Adrenal gland (tissue), 19 donors: ENCODE measurements at regions of chr1 and their contacts with region 1.

Region 1: GRCh38 chr1:155277070-155277895 is at the start of gene HCN3:
- DNase-seq: peak; percentile 97 to 99 (median 99)
- H3K4me3 ChIP-seq: peak within 1 kb of the TSS; percentile 38 to 82 (median 66)
- H3K27ac ChIP-seq: peak within 1 kb of the TSS in 2 of 5 donors; percentile 60 to 73
- H3K4me1 ChIP-seq: peaks cover 16 to 21% of the 10 kb centered on the region in 2 donors
- H3K27me3 ChIP-seq: no peaks in the 10 kb centered on the region
- CTCF ChIP-seq: peak in 4 of 6 experiments; percentile 27 to 70 (median 62)
- POLR2A ChIP-seq: no peak
- total RNA-seq, gene HCN3: 1.0 to 6.5 (median 3.6) TPM

Region 2: DNA sequence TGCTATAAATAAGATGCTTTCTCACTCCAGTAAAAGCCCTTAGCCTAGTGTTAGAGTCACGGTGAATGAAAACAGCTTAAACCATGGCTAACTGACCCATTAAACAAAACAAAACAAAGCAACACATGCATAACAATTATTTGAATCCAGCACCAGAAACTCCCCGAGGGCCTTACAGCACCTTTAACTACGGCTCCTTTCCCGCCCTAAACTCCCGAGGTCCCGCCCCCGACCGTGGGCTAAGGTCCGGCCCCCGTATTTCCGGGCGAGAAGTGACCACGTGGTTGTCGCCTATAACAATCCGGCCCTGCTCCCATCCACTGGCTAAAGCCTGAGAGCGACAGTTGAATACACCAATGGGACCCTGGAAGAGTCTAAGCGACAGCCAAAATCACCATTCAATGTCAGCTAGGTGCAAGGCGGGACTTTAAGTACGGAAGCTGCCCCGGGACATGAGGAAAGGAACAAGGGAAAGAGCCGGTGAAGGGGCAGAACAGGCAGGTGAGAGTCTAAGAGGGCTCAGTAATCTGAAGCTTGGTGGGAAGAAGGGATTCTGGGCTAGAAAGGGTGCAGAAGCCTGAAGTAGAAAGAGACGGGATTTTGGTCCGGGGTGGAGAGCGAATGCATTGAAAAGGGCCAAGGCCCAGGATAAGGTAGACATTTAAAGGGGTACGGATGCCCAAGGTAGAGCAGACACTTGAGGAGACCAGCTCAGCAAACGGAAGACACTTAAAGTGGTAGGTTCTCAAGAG is 294.2 kb before region 1 on chr1 and contains the start of gene FLAD1:
- intact Hi-C with region 1: no loop called
- DNase-seq: peak; percentile 97 to 100 (median 99)
- H3K4me3 ChIP-seq: peak within 1 kb of the TSS in 3 of 4 donors; percentile 21 to 92 (median 50)
- H3K27ac ChIP-seq: peak within 1 kb of the TSS in 2 of 5 donors; percentile 43 to 47
- H3K4me1 ChIP-seq: peaks cover 7 to 14% of the 10 kb centered on the region in 2 donors
- H3K27me3 ChIP-seq: no peaks in the 10 kb centered on the region
- CTCF ChIP-seq: no peak
- POLR2A ChIP-seq: peak in 1 of 2 donors; percentile 32
- total RNA-seq, gene FLAD1: 21.6 to 43.0 (median 28.7) TPM

Region 3: GRCh38 chr1:155323798-155324610 is 46.7 kb after region 1 on chr1:
- intact Hi-C with region 1: loop called in 1 of 2 experiments (anchors 5 kb)
- DNase-seq: peak; percentile 95 to 98 (median 98)
- H3K4me3 ChIP-seq: peak overlapping the region; percentile 20 to 82 (median 79)
- H3K27ac ChIP-seq: peak overlapping the region; percentile 77 to 97 (median 94)
- H3K4me1 ChIP-seq: peaks cover 26 to 43% of the 10 kb centered on the region in 2 donors
- H3K27me3 ChIP-seq: no peaks in the 10 kb centered on the region
- CTCF ChIP-seq: no peak
- POLR2A ChIP-seq: peak; percentile 61 to 65